Panc1 (cell line): ENCODE measurements at regions of chr14 and their contacts with region 1.

Region 1: GRCh38 chr14:89040460-89041259 is 216.2 kb downstream of the TTC8 start:
- DNase-seq: peak; percentile 60
- ATAC-seq: peak; percentile 93
- H3K4me3 ChIP-seq: peak overlapping the region; percentile 36 to 59
- H3K27ac ChIP-seq: no peak overlapping the region
- H3K4me1 ChIP-seq: no peaks in the 10 kb centered on the region; the same call in 1 of the 2 replicates
- H3K27me3 ChIP-seq: no peaks in the 10 kb centered on the region
- CTCF ChIP-seq: peak; percentile 91

Region 2: DNA sequence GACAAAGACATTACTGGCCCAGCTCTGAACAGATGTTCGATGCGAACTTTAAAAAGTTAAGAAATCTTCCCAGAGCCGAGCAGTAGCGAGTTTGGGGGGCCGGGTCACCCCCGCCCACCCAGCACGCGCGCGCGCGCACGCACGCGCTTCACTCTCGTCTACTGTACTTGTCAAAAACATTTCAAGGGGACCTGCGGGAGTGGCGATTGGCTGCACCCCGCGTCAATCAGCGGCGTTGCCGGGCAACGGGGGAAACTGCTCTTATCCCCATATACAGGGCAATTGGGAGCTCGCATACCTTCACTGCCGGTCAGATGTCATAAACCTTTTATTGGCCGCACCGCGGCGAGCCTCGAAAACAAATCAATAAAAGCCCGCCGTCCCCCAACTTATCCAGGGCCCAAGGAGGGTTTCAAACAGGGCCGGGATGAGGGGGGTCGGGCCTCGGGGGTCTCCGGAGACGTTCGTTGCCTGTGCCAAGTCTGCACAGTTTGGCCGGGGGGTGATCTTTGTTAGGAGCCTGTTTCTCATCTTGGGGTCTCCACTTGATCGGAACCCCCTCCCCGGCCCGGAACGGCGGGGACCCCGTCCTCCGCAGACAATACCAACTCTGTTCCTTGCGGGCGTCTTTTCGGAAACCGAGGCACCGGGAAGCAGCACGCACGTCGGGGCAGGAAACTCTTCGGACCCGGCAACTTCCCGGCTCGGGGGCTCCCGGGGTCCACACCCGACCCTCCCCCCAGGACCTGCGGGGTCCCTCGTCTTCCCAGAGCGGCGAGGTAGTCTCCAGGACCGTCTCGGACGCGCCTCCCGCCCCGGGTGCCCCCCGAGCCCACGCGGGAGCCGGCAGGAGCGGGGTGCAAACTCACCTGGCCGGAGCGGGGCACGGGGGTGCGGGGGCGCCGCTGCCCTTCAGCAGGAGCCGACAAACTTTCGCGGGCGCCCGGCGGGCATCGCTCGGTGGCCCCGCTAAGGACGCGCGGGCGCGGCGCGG is 375.6 kb after region 1 on chr14:
- CTCF ChIA-PET with region 1: no interaction called
- POLR2A ChIA-PET with region 1: no interaction called
- in situ Hi-C with region 1: no loop called
- intact Hi-C with region 1: loop called (anchors 5 kb)
- DNase-seq: peak; percentile 78
- ATAC-seq: peak; percentile 95
- H3K4me3 ChIP-seq: peak overlapping the region; percentile 58 to 71
- H3K27ac ChIP-seq: no peak overlapping the region
- H3K4me1 ChIP-seq: no peaks in the 10 kb centered on the region
- H3K27me3 ChIP-seq: no peaks in the 10 kb centered on the region
- CTCF ChIP-seq: no peak

Region 3: GRCh38 chr14:89899917-89900663 is 859.4 kb after region 1 on chr14:
- CTCF ChIA-PET with region 1: no interaction called
- POLR2A ChIA-PET with region 1: no interaction called
- in situ Hi-C with region 1: no loop called
- intact Hi-C with region 1: loop called (anchors 10 kb)
- DNase-seq: no peak
- ATAC-seq: no peak
- H3K4me3 ChIP-seq: no peak overlapping the region
- H3K27ac ChIP-seq: no peak overlapping the region
- H3K4me1 ChIP-seq: no peaks in the 10 kb centered on the region
- H3K27me3 ChIP-seq: no peaks in the 10 kb centered on the region
- CTCF ChIP-seq: peak; percentile 46; the same call in 1 of the 2 replicates